ENCODE measurements at regions of chr3 and their contacts with region 1.

Region 1: DNA sequence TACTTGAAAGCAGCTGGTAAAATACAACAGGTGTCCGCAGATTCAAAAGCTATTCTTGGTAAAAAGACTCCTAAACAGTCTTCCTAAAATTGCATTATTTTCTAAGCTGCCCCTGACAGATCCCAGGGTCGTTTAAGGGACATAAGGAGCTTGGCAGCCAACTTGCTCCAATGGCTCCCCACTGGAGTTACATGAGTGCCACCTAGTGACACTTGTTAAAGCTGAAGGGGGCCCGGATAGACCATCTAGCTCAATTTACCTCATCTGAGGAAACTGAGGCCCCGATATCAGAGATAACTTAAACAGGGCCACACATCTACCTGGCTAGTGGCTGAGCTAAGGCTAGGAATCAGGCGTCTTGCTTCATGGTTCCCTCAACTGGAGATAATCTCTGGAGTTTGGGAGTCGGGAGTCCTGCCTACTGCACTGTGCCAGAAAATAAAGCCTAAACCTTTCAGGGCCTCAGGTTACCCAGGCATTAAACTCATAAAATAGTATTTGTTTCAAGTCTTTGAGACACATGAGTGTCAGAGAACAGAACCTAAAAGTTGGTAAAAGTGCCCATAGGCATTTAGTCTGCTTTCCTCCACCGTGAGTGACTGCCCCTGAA is 6.5 kb upstream of the TBC1D23 start:
- DNase-seq: peak; percentile 59 to 70 (median 63)
- H3K4me3 ChIP-seq: no peak overlapping the region
- H3K27ac ChIP-seq: no peak overlapping the region
- H3K4me1 ChIP-seq: peaks cover 0 to 3% (median 1%) of the 10 kb centered on the region in 4 experiments
- H3K27me3 ChIP-seq: no peaks in the 10 kb centered on the region

Region 2: GRCh38 chr3:99833617-99834205 is 420.6 kb before region 1 on chr3:
- CTCF ChIA-PET with region 1: interaction called, 15 read pairs
- POLR2A ChIA-PET with region 1: interaction called, 3 read pairs
- DNase-seq: no peak
- H3K4me3 ChIP-seq: no peak overlapping the region
- H3K27ac ChIP-seq: no peak overlapping the region
- H3K4me1 ChIP-seq: no peaks in the 10 kb centered on the region
- H3K27me3 ChIP-seq: no peaks in the 10 kb centered on the region

Region 3: DNA sequence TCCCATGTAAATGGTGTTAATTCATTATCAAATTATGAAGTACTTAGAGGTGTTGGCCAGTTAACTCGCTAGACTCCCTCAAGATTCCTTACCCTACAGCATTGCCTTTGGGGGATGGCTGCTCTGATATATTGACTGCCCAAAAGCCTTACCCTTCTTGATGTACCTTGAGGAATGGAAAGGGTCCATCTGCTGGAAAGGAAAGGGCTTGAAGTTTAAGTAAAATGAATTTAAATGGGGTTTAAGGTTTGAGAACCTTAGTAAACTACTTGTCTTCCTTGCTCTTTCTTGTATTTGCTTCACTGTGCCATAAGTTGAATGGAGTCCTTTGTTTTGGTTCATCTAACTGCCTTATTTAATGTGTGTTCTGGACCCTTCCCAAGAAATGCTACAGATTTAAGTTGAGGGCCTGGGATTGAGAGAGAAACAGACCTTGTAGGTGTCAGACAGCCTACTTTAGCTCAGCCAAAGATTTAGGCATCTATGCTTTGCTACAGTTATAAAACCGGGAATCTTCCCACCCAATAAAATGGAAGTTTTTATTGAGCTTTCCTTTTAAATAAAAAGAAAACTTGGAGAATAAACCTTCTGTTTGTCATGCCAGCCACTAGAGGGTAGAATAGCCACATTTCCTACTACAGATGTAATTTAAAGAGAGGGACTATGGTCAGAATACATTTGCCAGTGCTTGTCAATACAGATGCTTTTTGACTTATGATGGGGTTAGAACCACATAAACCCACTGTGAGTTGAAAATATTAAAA is 411.3 kb before region 1 on chr3:
- CTCF ChIA-PET with region 1: interaction called, 26 read pairs
- POLR2A ChIA-PET with region 1: no interaction called
- DNase-seq: peak; percentile 51 to 56 (median 54)
- H3K4me3 ChIP-seq: no peak overlapping the region
- H3K27ac ChIP-seq: no peak overlapping the region
- H3K4me1 ChIP-seq: peaks cover 0 to 17% (median 5%) of the 10 kb centered on the region in 4 experiments
- H3K27me3 ChIP-seq: no peaks in the 10 kb centered on the region

Region 4: DNA sequence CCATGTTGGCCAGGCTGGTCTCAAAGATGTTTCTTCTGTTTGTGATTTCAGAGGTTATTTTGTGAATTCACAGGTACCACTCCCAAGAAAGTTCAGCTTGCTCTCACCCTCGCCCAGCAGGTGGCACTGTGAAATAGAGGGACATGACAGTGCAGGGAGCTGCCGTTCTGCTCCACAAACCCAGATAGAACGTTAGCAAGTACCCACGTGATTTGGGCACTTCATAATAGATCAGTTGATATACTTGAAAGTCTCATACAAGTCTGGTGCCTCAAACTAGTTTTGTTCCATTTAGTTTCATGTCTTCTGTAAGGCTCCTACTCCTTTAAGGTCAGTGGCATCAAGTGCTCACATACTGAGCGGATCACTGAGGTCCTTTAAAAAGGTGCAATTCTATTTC is 185.4 kb before region 1 on chr3:
- CTCF ChIA-PET with region 1: interaction called, 89 read pairs
- POLR2A ChIA-PET with region 1: no interaction called
- DNase-seq: peak; percentile 85 to 91 (median 90)
- H3K4me3 ChIP-seq: peak overlapping the region in 2 of 7 experiments; percentile 41 to 63
- H3K27ac ChIP-seq: no peak overlapping the region
- H3K4me1 ChIP-seq: peaks cover 19 to 32% (median 28%) of the 10 kb centered on the region in 4 experiments
- H3K27me3 ChIP-seq: no peaks in the 10 kb centered on the region

Region 5: DNA sequence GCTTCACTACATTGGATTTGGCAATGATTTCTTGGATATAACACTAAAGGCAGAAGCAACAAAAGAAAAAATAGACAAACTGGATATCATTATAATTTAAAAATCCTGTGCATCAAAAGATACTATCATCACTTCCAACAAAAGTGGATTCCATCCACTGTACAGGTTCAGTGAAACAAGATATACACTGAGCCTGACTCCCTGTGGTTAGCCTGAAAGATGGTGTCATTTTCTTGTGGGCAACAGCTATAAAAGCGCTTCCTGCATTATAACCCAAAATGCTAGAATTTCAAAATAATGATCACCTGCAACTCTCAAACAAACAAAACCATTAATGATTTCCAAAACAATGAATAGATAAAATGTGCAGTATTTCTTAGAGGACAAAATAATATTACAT is 33.1 kb before region 1 on chr3:
- CTCF ChIA-PET with region 1: no interaction called
- POLR2A ChIA-PET with region 1: no interaction called
- DNase-seq: peak in 2 of 3 donors; percentile 18 to 19
- H3K4me3 ChIP-seq: no peak overlapping the region
- H3K27ac ChIP-seq: no peak overlapping the region
- H3K4me1 ChIP-seq: no peaks in the 10 kb centered on the region
- H3K27me3 ChIP-seq: no peaks in the 10 kb centered on the region